CD8-positive, alpha-beta T cell (primary cell): ENCODE measurements at regions of chr19 and their contacts with region 1.

Region 1: GRCh38 chr19:39846176-39846677 is at the start of gene FBL:
- DNase-seq: peak; percentile 94 to 99 (median 98)
- ATAC-seq: peak; percentile 94
- H3K4me3 ChIP-seq: peak within 1 kb of the TSS; percentile 86 to 87
- H3K4me3 Mint-ChIP-seq: peak within 1 kb of the TSS; percentile 87
- H3K27ac ChIP-seq: peak within 1 kb of the TSS; percentile 71 to 84
- H3K27ac Mint-ChIP-seq: peak within 1 kb of the TSS; percentile 96
- H3K4me1 ChIP-seq: peaks cover 39% of the 10 kb centered on the region
- H3K4me1 Mint-ChIP-seq: peaks cover 48% of the 10 kb centered on the region
- H3K27me3 ChIP-seq: no peaks in the 10 kb centered on the region
- H3K27me3 Mint-ChIP-seq: no peaks in the 10 kb centered on the region
- CTCF ChIP-seq: no peak
- total RNA-seq, gene FBL: 351 to 365 TPM

Region 2: GRCh38 chr19:39480337-39481228 is 365.6 kb before region 1 on chr19 and contains the start of gene TIMM50:
- CTCF ChIA-PET with region 1: no interaction called
- POLR2A ChIA-PET with region 1: no interaction called
- intact Hi-C with region 1: loop called in 1 of 2 experiments (anchors 5 kb)
- DNase-seq: peak; percentile 94 to 98 (median 97)
- ATAC-seq: peak; percentile 98
- H3K4me3 ChIP-seq: peak within 1 kb of the TSS; percentile 85 to 98
- H3K4me3 Mint-ChIP-seq: peak within 1 kb of the TSS; percentile 91
- H3K27ac ChIP-seq: peak within 1 kb of the TSS; percentile 82
- H3K27ac Mint-ChIP-seq: peak within 1 kb of the TSS; percentile 90
- H3K4me1 ChIP-seq: peaks cover 15% of the 10 kb centered on the region
- H3K4me1 Mint-ChIP-seq: peaks cover 27% of the 10 kb centered on the region
- H3K27me3 ChIP-seq: no peaks in the 10 kb centered on the region
- H3K27me3 Mint-ChIP-seq: no peaks in the 10 kb centered on the region
- CTCF ChIP-seq: no peak
- total RNA-seq, gene TIMM50: 48.6 to 56.7 TPM

Region 3: GRCh38 chr19:39546599-39546998 is 299.6 kb before region 1 on chr19:
- CTCF ChIA-PET with region 1: no interaction called
- POLR2A ChIA-PET with region 1: no interaction called
- intact Hi-C with region 1: loop called (anchors 2 to 10 kb)
- DNase-seq: no peak
- ATAC-seq: no peak
- H3K4me3 ChIP-seq: no peak overlapping the region
- H3K4me3 Mint-ChIP-seq: no peak overlapping the region
- H3K27ac ChIP-seq: no peak overlapping the region
- H3K27ac Mint-ChIP-seq: no peak overlapping the region
- H3K4me1 ChIP-seq: peaks cover 32% of the 10 kb centered on the region
- H3K4me1 Mint-ChIP-seq: peaks cover 39% of the 10 kb centered on the region
- H3K27me3 ChIP-seq: no peaks in the 10 kb centered on the region
- H3K27me3 Mint-ChIP-seq: no peaks in the 10 kb centered on the region
- CTCF ChIP-seq: no peak

Region 4: GRCh38 chr19:39671738-39672363 is 174.4 kb before region 1 on chr19:
- CTCF ChIA-PET with region 1: no interaction called
- POLR2A ChIA-PET with region 1: no interaction called
- intact Hi-C with region 1: loop called in 1 of 2 experiments (anchors 5 kb)
- DNase-seq: peak in 7 of 9 experiments; percentile 19 to 74 (median 46)
- ATAC-seq: peak; percentile 78
- H3K4me3 ChIP-seq: no peak overlapping the region
- H3K4me3 Mint-ChIP-seq: no peak overlapping the region
- H3K27ac ChIP-seq: no peak overlapping the region
- H3K27ac Mint-ChIP-seq: no peak overlapping the region
- H3K4me1 ChIP-seq: peaks cover 12% of the 10 kb centered on the region
- H3K4me1 Mint-ChIP-seq: peaks cover 7% of the 10 kb centered on the region
- H3K27me3 ChIP-seq: no peaks in the 10 kb centered on the region
- H3K27me3 Mint-ChIP-seq: peaks cover 13% of the 10 kb centered on the region
- CTCF ChIP-seq: peak; percentile 66

Region 5: GRCh38 chr19:39792999-39793546 is 53.2 kb before region 1 on chr19:
- CTCF ChIA-PET with region 1: interaction called, 106 read pairs
- POLR2A ChIA-PET with region 1: interaction called, 9 read pairs
- intact Hi-C with region 1: loop called (anchors 1 kb)
- DNase-seq: peak; percentile 52 to 83 (median 74)
- ATAC-seq: peak; percentile 94
- H3K4me3 ChIP-seq: peak overlapping the region; percentile 53 to 74
- H3K4me3 Mint-ChIP-seq: peak overlapping the region; percentile 76
- H3K27ac ChIP-seq: no peak overlapping the region
- H3K27ac Mint-ChIP-seq: no peak overlapping the region
- H3K4me1 ChIP-seq: no peaks in the 10 kb centered on the region
- H3K4me1 Mint-ChIP-seq: peaks cover 2% of the 10 kb centered on the region
- H3K27me3 ChIP-seq: no peaks in the 10 kb centered on the region
- H3K27me3 Mint-ChIP-seq: peaks cover 5% of the 10 kb centered on the region
- CTCF ChIP-seq: peak; percentile 85

Region 6: DNA sequence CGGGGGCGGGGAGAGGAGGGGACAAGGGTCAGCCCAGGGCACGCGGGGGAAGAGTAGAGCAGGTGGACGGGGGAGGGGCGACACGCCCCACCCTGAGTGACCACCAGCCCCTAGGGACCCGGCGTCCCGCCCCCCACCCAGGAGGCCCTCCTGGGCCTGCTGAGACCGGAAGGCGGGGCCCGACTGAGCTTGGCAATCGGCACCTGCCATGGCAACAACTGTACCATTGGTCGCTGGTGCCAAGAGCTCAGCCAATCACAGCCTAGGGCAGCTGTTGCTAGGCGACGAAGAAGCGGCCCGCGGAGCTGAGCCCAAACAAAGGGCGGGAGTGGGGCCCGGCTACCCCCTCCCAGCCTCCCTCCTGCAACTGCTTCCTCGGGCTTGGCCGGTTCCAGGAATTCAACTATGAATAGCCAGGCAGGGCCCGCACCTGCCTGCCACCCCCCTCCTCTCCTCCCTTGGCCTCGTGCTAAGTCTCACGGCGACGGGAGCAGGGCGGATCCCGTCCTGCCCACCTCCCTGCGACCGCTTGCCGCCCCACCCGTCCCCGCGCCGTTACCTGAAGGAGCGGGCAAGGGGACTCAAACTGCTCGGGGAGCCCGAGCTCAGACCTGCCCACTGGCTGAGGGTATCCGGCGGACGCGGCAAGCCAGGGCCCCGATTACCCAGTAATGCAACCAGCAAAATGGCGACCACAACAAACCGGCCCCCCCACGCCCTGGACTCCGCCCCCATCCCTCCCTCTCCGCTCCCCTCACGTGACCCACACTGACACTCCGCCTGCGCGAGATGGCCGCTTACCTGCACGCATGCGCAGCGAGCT is 12.6 kb before region 1 on chr19 and contains the start of gene DYRK1B:
- CTCF ChIA-PET with region 1: interaction called, 24 read pairs
- POLR2A ChIA-PET with region 1: interaction called, 16 read pairs
- intact Hi-C with region 1: loop called (anchors 1 kb)
- DNase-seq: peak; percentile 97 to 99 (median 98)
- ATAC-seq: peak; percentile 84
- H3K4me3 ChIP-seq: peak within 1 kb of the TSS; percentile 93 to 99
- H3K4me3 Mint-ChIP-seq: peak within 1 kb of the TSS; percentile 75
- H3K27ac ChIP-seq: peak within 1 kb of the TSS; percentile 96 to 99
- H3K27ac Mint-ChIP-seq: peak within 1 kb of the TSS; percentile 90
- H3K4me1 ChIP-seq: peaks cover 23% of the 10 kb centered on the region
- H3K4me1 Mint-ChIP-seq: peaks cover 28% of the 10 kb centered on the region
- H3K27me3 ChIP-seq: no peaks in the 10 kb centered on the region
- H3K27me3 Mint-ChIP-seq: no peaks in the 10 kb centered on the region
- CTCF ChIP-seq: no peak
- total RNA-seq, gene DYRK1B: 19.0 to 22.6 TPM

Region 7: GRCh38 chr19:41397086-41398049 is 1551.1 kb after region 1 on chr19 and contains the starts of genes BCKDHA and EXOSC5:
- CTCF ChIA-PET with region 1: no interaction called
- POLR2A ChIA-PET with region 1: no interaction called
- intact Hi-C with region 1: loop called in 1 of 2 experiments (anchors 5 kb)
- DNase-seq: peak; percentile 97 to 100 (median 99)
- ATAC-seq: peak; percentile 97
- H3K4me3 ChIP-seq: peak within 1 kb of the TSS; percentile 84 to 97
- H3K4me3 Mint-ChIP-seq: peak within 1 kb of the TSS; percentile 98
- H3K27ac ChIP-seq: peak within 1 kb of the TSS; percentile 98
- H3K27ac Mint-ChIP-seq: peak within 1 kb of the TSS; percentile 100
- H3K4me1 ChIP-seq: peaks cover 28% of the 10 kb centered on the region
- H3K4me1 Mint-ChIP-seq: peaks cover 47% of the 10 kb centered on the region
- H3K27me3 ChIP-seq: no peaks in the 10 kb centered on the region
- H3K27me3 Mint-ChIP-seq: no peaks in the 10 kb centered on the region
- CTCF ChIP-seq: no peak
- total RNA-seq, gene BCKDHA: 19.4 to 20.5 TPM
- total RNA-seq, gene EXOSC5: 4.1 to 5.5 TPM